ENCODE measurements at regions of chr1 and their contacts with region 1.

Region 1: GRCh38 chr1:151340870-151341754 is 5.9 kb downstream of the RFX5 start:
- DNase-seq: no peak
- ATAC-seq: peak; percentile 86 to 89

Region 2: DNA sequence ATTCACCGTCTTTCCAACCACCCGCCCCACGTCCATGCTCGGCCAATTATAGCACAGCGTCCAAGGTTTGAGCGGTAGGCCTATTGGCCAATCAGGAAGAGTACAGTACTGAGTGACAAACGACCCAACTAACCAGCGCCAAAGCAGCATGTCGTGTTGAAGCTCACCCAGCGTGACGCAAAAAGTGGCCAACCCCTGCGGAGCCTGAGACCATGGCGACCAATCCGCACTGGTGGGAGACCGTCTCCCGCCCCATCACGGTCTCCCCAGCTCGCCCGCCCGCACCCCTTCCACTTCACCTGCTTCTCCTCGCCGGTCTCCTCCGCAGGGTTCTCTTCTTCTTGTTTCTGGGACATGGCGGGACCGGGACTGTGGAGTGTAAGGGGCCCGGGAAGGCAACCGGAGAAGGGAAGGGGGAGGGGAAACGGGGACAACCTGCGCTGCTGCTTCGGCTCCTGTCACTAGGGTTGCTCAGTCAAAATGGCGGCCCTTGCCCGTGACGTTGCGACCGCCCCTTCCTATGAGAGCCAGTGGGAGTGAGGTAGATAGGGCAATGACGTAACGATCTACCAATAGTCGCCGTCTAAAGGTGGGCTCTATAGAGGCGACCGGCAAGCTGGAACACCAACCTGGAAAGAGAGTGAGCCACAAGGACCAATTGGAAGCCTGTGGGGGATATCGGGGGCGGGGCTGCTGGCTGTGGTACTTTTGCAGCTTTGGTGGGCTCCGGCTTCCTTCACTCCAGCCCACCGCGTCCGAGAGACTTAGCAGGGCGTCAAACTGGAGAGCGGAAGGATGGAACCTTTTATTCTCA is 711.8 kb before region 1 on chr1 and contains the start of gene ENSA:
- intact Hi-C with region 1: no loop called
- DNase-seq: peak; percentile 97
- ATAC-seq: peak; percentile 97 to 98
- total RNA-seq, gene ENSA: 115 to 125 TPM

Region 3: GRCh38 chr1:151294742-151295462 is 46.2 kb before region 1 on chr1:
- intact Hi-C with region 1: loop called in 1 of 2 experiments (anchors 5 kb)
- DNase-seq: no peak
- ATAC-seq: no peak

Region 4: GRCh38 chr1:151547119-151547899 is 206.2 kb after region 1 on chr1:
- intact Hi-C with region 1: no loop called
- DNase-seq: peak; percentile 59
- ATAC-seq: peak; percentile 91 to 95

Region 5: GRCh38 chr1:151790071-151790940 is 449.2 kb after region 1 on chr1 and contains the start of gene TDRKH:
- intact Hi-C with region 1: no loop called
- DNase-seq: peak; percentile 99
- ATAC-seq: peak; percentile 99 to 100
- total RNA-seq, gene TDRKH: 4.4 to 6.7 TPM

Measured in left cardiac atrium (tissue), 4 donors.